Activated naive CD4-positive, alpha-beta T cell treated with anti-CD3 and anti-CD28 coated beads, Interleukin-2, amount 10 ng/mL, durations not matched to agents 7 days and 5 days (primary cell): ENCODE measurements at regions of chr2 and their contacts with region 1.

Region 1: DNA sequence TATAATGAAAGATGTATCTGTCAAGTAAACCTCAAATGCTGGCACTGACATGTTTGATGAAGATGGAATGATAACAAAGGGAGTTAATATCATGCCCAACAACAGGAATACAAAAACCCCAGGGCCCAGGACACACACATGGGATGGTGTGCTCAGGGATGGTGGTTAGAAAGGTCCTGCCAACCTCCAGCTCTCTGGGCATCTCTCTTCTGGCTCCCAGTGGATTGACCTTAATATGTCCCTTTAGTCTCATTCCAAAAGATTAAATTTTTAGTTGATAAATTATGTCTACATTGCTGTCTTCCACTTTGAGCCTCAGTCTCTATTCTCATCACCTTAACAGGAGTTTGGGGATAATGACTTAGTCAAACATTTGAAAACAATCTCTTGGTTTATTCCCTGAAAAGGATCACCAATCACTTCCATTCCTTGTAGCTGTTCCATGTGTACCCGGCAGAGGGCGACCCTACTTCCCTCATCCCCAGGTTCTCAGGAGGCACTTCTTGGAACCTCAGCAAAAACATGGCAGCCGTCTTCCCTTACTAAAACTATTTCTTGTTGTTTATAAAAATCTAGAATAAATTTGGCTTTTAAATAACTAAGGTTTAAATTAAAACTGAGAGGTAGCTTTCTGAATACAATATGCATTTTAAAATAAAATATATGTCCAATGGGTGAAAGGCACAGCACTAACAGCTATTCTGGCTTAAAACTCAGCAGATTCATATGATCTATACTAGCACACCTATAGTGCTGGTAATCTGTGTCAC is 29.6 kb downstream of the MCEE start:
- DNase-seq: peak; percentile 62
- H3K4me3 Mint-ChIP-seq: no peak overlapping the region
- H3K27ac Mint-ChIP-seq: no peak overlapping the region
- H3K4me1 Mint-ChIP-seq: peaks cover 2% of the 10 kb centered on the region
- H3K27me3 Mint-ChIP-seq: peaks cover 23% of the 10 kb centered on the region

Region 2: GRCh38 chr2:70641263-70641784 is 459.1 kb before region 1 on chr2:
- CTCF ChIA-PET with region 1: no interaction called
- DNase-seq: no peak
- H3K4me3 Mint-ChIP-seq: no peak overlapping the region
- H3K27ac Mint-ChIP-seq: no peak overlapping the region
- H3K4me1 Mint-ChIP-seq: peaks cover 24% of the 10 kb centered on the region
- H3K27me3 Mint-ChIP-seq: peaks cover 9% of the 10 kb centered on the region

Region 3: GRCh38 chr2:71068218-71069035 is 32.0 kb before region 1 on chr2 and contains the start of gene NAGK:
- CTCF ChIA-PET with region 1: interaction called, 39 read pairs
- DNase-seq: peak; percentile 98
- H3K4me3 Mint-ChIP-seq: peak within 1 kb of the TSS; percentile 93
- H3K27ac Mint-ChIP-seq: peak within 1 kb of the TSS; percentile 94
- H3K4me1 Mint-ChIP-seq: peaks cover 60% of the 10 kb centered on the region
- H3K27me3 Mint-ChIP-seq: peaks cover 5% of the 10 kb centered on the region

Region 4: GRCh38 chr2:71143782-71144181 is 43.4 kb after region 1 on chr2:
- CTCF ChIA-PET with region 1: no interaction called
- DNase-seq: no peak
- H3K4me3 Mint-ChIP-seq: no peak overlapping the region
- H3K27ac Mint-ChIP-seq: no peak overlapping the region
- H3K4me1 Mint-ChIP-seq: no peaks in the 10 kb centered on the region
- H3K27me3 Mint-ChIP-seq: no peaks in the 10 kb centered on the region

Region 5: GRCh38 chr2:71157124-71157793 is 56.9 kb after region 1 on chr2:
- CTCF ChIA-PET with region 1: interaction called, 25 read pairs
- DNase-seq: peak; percentile 69
- H3K4me3 Mint-ChIP-seq: no peak overlapping the region
- H3K27ac Mint-ChIP-seq: no peak overlapping the region
- H3K4me1 Mint-ChIP-seq: peaks cover 2% of the 10 kb centered on the region
- H3K27me3 Mint-ChIP-seq: peaks cover 23% of the 10 kb centered on the region